ENCODE measurements at regions of chr17 and their contacts with region 1.

Region 1: GRCh38 chr17:35170968-35171771 is 23.0 kb downstream of the SLC35G3 start:
- DNase-seq: no peak
- H3K4me3 ChIP-seq: no peak overlapping the region
- H3K27me3 ChIP-seq: peaks cover 3% of the 10 kb centered on the region
- CTCF ChIP-seq: peak; percentile 23; the same call in 1 of the 2 replicates

Region 2: GRCh38 chr17:35531160-35531559 is 360.0 kb after region 1 on chr17:
- CTCF ChIA-PET with region 1: interaction called, 31 read pairs
- POLR2A ChIA-PET with region 1: no interaction called
- DNase-seq: no peak
- H3K4me3 ChIP-seq: no peak overlapping the region
- H3K27me3 ChIP-seq: no peaks in the 10 kb centered on the region
- CTCF ChIP-seq: no peak

Region 3: GRCh38 chr17:35540589-35541404 is 369.6 kb after region 1 on chr17:
- CTCF ChIA-PET with region 1: interaction called, 31 read pairs
- POLR2A ChIA-PET with region 1: no interaction called
- DNase-seq: no peak
- H3K4me3 ChIP-seq: no peak overlapping the region
- H3K27me3 ChIP-seq: no peaks in the 10 kb centered on the region
- CTCF ChIP-seq: no peak

Region 4: DNA sequence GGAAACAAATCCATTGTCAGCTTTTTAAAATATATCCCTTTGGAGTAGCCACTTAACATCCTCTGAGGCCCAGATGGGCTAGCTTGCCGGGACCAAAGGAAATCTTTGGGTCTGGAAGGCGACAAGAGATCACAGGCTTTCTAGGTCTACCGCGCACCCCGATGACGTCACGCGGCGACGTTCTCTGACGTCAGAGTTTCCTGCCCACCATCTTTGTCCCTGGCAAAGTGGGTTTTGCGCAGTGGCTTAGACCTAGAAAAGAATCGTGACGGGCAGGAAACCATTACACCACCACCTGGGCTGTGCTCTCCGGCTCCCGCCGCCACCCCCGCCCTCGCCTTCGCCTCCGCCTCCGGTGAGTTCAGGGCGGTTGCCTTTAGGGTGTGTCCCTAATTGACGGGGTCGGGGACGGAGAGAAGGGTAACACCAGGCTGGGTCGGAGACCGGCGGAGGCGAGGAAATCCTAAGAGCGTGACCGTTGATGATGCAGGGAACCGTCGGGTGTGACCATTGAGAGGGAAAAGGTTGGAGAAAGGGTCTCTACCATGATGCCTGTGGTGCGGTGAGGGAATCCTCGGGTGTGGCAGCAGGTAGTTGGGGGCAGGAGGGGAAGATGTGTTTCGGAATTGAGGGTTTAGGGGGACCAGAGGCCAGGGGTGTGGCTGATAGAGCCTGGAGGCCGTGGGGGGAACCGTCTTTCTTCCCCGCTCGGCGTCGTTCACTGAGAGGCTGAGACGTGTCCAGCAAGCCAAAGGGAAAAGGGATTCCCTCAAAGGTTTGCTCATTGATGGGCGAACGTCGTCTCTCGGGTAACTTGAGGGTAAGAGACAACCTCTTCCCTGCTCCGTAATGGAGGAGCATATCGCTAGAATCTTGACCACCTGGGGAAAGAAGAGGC is 416.2 kb after region 1 on chr17 and contains the start of gene AP2B1:
- CTCF ChIA-PET with region 1: no interaction called
- POLR2A ChIA-PET with region 1: no interaction called
- DNase-seq: peak; percentile 69
- H3K4me3 ChIP-seq: peak within 1 kb of the TSS; percentile 75
- H3K27me3 ChIP-seq: no peaks in the 10 kb centered on the region; the same call in 1 of the 2 replicates
- CTCF ChIP-seq: no peak
- polyA plus RNA-seq, gene AP2B1: 122 and 151 TPM in 2 replicates

Measured in BJ (cell line).